ENCODE measurements at regions of chr1 and their contacts with region 1.

Region 1: GRCh38 chr1:26677306-26678115 is 18.3 kb upstream of the ARID1A start:
- DNase-seq: peak; percentile 86 to 91
- H3K4me3 ChIP-seq: no peak overlapping the region
- H3K27ac ChIP-seq: no peak overlapping the region
- H3K4me1 ChIP-seq: peaks cover 11% of the 10 kb centered on the region; the same call in 1 of the 2 replicates
- H3K27me3 ChIP-seq: no peaks in the 10 kb centered on the region
- CTCF ChIP-seq: peak; percentile 71

Region 2: DNA sequence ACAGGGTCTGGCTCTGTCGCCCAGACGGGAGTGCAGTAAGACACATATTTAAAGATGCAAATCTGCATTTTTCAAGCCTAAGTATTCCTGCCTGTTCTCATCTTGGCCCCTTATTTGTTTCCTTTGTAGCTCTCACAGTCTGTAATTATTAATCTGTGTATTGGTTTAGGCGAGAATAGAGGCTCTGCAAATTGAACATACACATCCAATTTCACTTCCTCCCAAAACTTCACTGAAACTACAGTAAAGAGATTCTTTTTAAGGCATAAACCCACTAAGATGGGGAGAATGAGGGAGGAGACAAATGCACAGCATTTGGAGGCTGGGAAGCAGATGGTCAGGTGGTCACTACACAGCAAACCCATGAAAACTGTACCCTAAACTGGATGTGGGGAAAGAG is 184.2 kb before region 1 on chr1:
- CTCF ChIA-PET with region 1: no interaction called
- POLR2A ChIA-PET with region 1: no interaction called
- intact Hi-C with region 1: no loop called
- DNase-seq: no peak
- H3K4me3 ChIP-seq: no peak overlapping the region
- H3K27ac ChIP-seq: no peak overlapping the region
- H3K4me1 ChIP-seq: no peaks in the 10 kb centered on the region
- H3K27me3 ChIP-seq: no peaks in the 10 kb centered on the region
- CTCF ChIP-seq: no peak

Region 3: GRCh38 chr1:26719204-26719603 is 41.7 kb after region 1 on chr1:
- CTCF ChIA-PET with region 1: interaction called, 4 read pairs
- POLR2A ChIA-PET with region 1: no interaction called
- intact Hi-C with region 1: loop called (anchors 1 kb)
- DNase-seq: no peak
- H3K4me3 ChIP-seq: no peak overlapping the region
- H3K27ac ChIP-seq: peak overlapping the region; percentile 16; the same call in 1 of the 2 replicates
- H3K4me1 ChIP-seq: peaks cover 19% of the 10 kb centered on the region; the same call in 1 of the 2 replicates
- H3K27me3 ChIP-seq: no peaks in the 10 kb centered on the region
- CTCF ChIP-seq: no peak

Region 4: DNA sequence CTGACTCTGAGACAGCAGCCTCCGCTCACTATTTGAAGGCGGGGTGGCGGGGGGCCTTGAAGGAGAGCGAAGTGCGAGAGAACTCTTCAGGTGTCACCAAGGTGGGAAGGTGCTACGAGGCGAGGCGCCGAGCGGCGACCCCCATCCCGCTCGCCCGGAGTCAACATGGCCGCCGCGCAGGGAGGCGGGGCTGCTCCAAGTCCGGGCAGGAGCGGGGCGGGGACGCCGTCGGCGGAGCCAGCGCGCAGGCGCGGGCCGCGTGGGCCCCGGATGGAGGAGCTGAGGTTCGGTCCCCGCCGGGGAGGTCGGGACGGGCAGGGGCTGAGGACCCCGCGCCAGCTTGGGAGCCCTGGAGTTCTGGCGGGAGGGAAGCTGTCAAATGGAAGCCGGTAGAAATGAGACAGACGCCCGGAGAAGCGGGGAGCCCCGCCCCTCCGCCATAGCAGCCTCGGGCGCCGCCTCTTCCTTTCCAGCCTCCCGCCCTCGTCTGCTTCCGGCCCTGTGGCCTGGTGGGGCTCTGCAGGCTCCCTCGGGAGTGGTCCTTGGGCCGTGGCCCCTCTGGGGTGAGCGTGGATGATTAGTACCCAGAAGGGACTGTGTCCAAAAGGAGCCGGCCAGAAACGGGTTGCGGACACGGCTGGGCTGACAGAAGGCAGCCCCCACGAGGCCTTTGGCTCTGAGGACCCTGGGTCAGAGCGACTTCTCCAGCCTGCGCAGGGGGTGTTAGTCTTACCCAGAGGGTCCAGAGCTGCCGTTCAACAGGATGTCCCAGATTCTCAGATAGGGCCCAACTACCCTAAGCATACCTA is 110.4 kb after region 1 on chr1 and contains the start of gene PIGV:
- CTCF ChIA-PET with region 1: interaction called, 22 read pairs
- POLR2A ChIA-PET with region 1: interaction called, 4 read pairs
- intact Hi-C with region 1: loop called (anchors 1 kb)
- DNase-seq: peak in 1 of 2 experiments; percentile 84
- H3K4me3 ChIP-seq: peak within 1 kb of the TSS; percentile 93
- H3K27ac ChIP-seq: peak within 1 kb of the TSS; percentile 92
- H3K4me1 ChIP-seq: peaks cover 52% of the 10 kb centered on the region
- H3K27me3 ChIP-seq: no peaks in the 10 kb centered on the region
- CTCF ChIP-seq: no peak
- total RNA-seq, gene PIGV: 30.8 and 31.9 TPM in 2 replicates